Activated CD8-positive, alpha-beta T cell treated with anti-CD3 and anti-CD28 coated beads, Interleukin-2, amount 10 ng/mL, durations not matched to agents 7 days and 5 days (primary cell): ENCODE measurements at regions of chr12 and their contacts with region 1.

Region 1: DNA sequence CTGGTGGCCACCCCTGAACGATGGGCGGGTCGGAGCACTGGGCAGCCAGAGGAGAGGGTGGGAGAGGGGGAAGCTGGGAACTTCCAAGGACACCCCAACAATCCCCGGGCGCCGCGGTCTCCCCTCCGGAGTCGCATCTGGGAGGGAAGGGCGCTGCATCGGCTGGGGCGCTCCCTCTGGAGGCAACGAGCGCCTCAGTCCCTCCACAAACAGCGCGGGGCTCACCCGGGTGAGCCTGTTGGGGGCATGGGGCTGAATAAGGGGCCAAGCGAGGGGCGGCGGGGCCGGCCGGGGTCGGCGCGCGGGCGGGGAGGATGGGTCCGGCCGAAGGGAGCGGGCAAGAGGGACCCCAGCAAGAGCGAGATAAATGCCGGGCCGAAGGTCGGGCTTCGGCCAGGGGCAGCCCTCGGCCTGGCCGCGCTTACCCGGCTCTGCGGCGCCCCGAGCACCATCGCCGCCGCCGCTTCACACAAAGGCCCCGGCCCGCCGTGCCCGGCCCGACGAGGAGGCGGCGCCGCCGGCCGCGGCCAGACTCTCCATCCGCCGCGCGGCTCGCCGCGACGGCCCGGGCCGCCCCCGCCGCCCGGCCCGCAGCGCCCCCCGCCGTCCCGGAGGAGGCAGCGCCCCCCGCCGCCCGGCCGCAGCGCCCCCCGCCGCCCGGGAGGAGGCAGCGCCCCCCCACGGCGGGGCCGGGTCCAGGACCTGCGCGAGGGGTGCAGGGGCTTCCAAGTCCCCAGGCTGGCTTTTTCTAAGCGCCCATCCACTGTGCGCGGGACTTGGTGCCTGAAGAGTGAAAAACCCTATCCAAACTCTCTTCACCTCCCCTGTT is at the start of gene ZBTB39:
- DNase-seq: peak; percentile 68
- ATAC-seq: peak; percentile 79
- H3K4me3 Mint-ChIP-seq: peak within 1 kb of the TSS; percentile 95
- H3K27ac Mint-ChIP-seq: peak within 1 kb of the TSS; percentile 83
- H3K4me1 Mint-ChIP-seq: peaks cover 60% of the 10 kb centered on the region
- H3K27me3 Mint-ChIP-seq: no peaks in the 10 kb centered on the region
- total RNA-seq, gene ZBTB39: 7.7 to 8.2 TPM

Region 2: GRCh38 chr12:56751712-56752598 is 254.2 kb before region 1 on chr12 and contains the start of gene PRIM1:
- CTCF ChIA-PET with region 1: interaction called, 213 read pairs
- POLR2A ChIA-PET with region 1: no interaction called
- DNase-seq: peak; percentile 91
- ATAC-seq: peak; percentile 89
- H3K4me3 Mint-ChIP-seq: peak within 1 kb of the TSS; percentile 99
- H3K27ac Mint-ChIP-seq: peak within 1 kb of the TSS; percentile 99
- H3K4me1 Mint-ChIP-seq: peaks cover 48% of the 10 kb centered on the region
- H3K27me3 Mint-ChIP-seq: no peaks in the 10 kb centered on the region
- total RNA-seq, gene PRIM1: 56.8 to 60.4 TPM

Region 3: GRCh38 chr12:56987551-56988053 is 18.6 kb before region 1 on chr12:
- CTCF ChIA-PET with region 1: interaction called, 50 read pairs
- POLR2A ChIA-PET with region 1: no interaction called
- DNase-seq: peak; percentile 82
- ATAC-seq: peak; percentile 86
- H3K4me3 Mint-ChIP-seq: no peak overlapping the region
- H3K27ac Mint-ChIP-seq: no peak overlapping the region
- H3K4me1 Mint-ChIP-seq: peaks cover 10% of the 10 kb centered on the region
- H3K27me3 Mint-ChIP-seq: peaks cover 14% of the 10 kb centered on the region

Region 4: GRCh38 chr12:57031138-57031725 is 25.0 kb after region 1 on chr12:
- CTCF ChIA-PET with region 1: interaction called, 34 read pairs
- POLR2A ChIA-PET with region 1: no interaction called
- DNase-seq: peak; percentile 46
- ATAC-seq: peak; percentile 75
- H3K4me3 Mint-ChIP-seq: no peak overlapping the region
- H3K27ac Mint-ChIP-seq: peak overlapping the region; percentile 73
- H3K4me1 Mint-ChIP-seq: peaks cover 35% of the 10 kb centered on the region
- H3K27me3 Mint-ChIP-seq: no peaks in the 10 kb centered on the region

Region 5: DNA sequence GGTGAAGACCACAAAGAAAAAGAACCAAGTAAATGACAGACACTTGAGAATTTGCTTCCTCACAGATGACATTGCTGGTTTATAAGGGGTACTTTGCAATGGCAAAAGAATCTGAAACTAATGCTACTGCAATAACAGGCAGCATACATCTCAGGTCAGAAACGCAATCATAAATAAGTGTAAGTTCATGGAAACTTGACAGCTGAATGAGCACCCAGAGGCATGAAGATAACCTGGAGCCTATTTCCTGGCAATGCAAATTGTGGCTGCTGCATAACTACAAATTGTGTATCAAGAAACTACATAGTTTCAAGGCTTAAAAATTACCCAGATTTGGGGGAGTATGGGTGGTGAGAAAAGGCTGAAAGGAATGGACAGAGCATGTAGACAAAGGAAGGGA is 52.3 kb after region 1 on chr12:
- CTCF ChIA-PET with region 1: interaction called, 201 read pairs
- POLR2A ChIA-PET with region 1: interaction called, 5 read pairs
- DNase-seq: no peak
- ATAC-seq: no peak
- H3K4me3 Mint-ChIP-seq: no peak overlapping the region
- H3K27ac Mint-ChIP-seq: peak overlapping the region; percentile 27
- H3K4me1 Mint-ChIP-seq: peaks cover 15% of the 10 kb centered on the region
- H3K27me3 Mint-ChIP-seq: no peaks in the 10 kb centered on the region

Region 6: DNA sequence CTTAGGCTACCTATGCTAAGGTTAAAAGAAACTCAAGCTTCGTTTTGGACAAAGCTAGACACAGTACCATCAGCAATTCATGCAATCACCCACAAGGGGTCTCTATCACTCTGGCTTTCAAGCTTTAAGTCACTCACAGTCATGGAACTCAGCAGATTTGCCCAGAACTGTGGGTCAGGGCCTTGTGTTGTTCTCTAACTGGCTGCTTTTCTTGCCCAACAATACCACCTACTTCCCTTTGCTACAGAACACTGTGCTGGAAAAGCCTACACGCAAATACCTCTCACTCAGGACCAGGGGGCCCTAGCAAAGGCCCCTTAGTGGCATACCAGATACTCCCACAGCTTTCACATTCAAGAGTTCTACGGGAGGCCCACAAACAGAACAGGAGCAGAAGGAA is 63.3 kb after region 1 on chr12:
- CTCF ChIA-PET with region 1: interaction called, 201 read pairs
- POLR2A ChIA-PET with region 1: no interaction called
- DNase-seq: peak; percentile 78
- ATAC-seq: peak; percentile 95
- H3K4me3 Mint-ChIP-seq: peak overlapping the region; percentile 5
- H3K27ac Mint-ChIP-seq: peak overlapping the region; percentile 76
- H3K4me1 Mint-ChIP-seq: peaks cover 44% of the 10 kb centered on the region
- H3K27me3 Mint-ChIP-seq: no peaks in the 10 kb centered on the region

Region 7: DNA sequence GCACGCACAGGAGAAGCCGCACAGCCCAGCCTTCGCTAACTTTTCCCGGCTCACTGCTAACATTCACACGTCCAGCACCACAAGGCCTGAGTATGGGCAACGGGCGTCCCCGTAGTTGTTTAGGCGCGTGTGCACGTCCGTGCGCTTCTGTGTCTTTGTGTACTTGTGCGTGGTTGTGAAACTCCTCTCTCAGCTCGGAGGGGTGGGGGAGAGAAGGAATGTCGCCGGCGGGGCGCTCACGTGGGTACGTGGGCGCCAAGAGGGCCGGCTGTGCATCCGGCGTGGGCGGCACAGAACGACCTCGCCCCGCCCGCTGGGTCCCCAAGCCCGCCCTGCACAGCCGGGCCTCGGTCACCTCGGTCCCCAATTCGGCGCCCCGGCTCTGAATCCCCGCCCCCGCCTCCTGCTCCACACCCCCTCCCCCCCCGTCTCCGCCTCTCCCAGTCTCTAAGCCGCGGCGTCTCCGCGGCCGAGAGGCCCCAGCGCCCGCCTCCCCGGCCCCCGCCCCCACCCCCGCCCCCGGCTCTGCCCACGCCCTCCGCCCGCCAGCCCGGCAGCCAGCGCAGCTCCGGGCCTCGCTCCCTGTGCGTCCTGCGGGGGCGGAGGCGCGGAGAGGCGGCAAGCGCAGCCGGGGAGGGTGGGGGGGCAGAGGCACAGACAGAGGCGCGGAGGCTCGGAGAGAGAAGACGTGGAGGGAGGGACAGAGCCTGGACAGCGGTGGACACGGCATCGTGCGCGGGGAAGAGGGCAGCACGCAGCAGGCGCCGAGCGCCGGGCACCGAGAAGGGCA is 82.5 kb after region 1 on chr12 and contains the start of gene NAB2:
- CTCF ChIA-PET with region 1: interaction called, 15 read pairs
- POLR2A ChIA-PET with region 1: interaction called, 3 read pairs
- DNase-seq: peak; percentile 98
- ATAC-seq: peak; percentile 78
- H3K4me3 Mint-ChIP-seq: peak within 1 kb of the TSS; percentile 93
- H3K27ac Mint-ChIP-seq: peak within 1 kb of the TSS; percentile 97
- H3K4me1 Mint-ChIP-seq: peaks cover 69% of the 10 kb centered on the region
- H3K27me3 Mint-ChIP-seq: no peaks in the 10 kb centered on the region
- total RNA-seq, gene NAB2: 12.9 to 13.7 TPM